ENCODE measurements at regions of chr1 and their contacts with region 1.

Region 1: DNA sequence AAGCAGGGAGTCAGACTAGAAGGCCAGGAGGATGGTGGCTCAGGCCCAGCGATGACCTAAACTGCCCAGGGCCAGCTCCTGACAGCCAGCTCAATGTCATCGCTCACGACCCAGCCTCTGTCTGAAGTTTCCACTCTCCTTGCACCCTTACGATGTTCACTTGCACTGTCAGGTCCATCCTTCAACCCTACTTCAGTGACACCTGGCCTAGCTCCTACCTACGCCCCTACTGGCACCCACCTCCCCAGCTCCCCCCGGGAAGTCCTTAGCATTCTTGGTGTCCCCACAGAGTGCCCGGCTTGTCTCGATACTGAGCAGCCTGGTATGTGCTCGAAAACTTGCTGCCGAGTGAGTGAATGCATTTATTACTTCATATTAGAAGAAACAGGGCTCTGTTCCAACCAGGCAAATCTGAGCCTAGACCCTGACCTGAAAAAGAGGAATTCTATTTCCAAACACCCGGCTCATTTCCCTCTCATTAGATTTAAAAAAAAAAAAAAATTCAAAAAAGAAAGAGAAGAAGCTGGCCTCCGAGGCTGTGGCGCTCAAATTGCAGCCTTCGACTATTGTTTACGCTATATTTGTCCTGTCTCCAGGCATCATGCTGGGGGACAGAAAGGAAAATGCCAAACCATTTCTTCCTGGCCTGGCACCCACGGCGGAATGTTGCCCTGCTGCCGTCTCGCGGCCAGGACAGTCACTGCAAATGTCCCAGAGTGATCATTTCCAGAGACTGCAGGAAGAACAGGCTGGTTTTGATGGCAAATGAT is 29.8 kb upstream of the LRRC38 start:
- DNase-seq: peak; percentile 67 to 69
- ATAC-seq: peak; percentile 62 to 83 (median 76)
- H3K4me3 ChIP-seq: peak overlapping the region in 1 of 10 donors; percentile 11
- H3K27ac ChIP-seq: peak overlapping the region; percentile 49 to 89 (median 82)
- H3K4me1 ChIP-seq: peaks cover 0 to 33% (median 5%) of the 10 kb centered on the region in 9 donors
- H3K27me3 ChIP-seq: peaks cover 0 to 3% (median 0%) of the 10 kb centered on the region in 7 donors
- CTCF ChIP-seq: peak in 8 of 9 donors; percentile 31 to 74 (median 56)

Region 2: GRCh38 chr1:13583966-13584791 is 40.5 kb after region 1 on chr1:
- intact Hi-C with region 1: loop called in 1 of 10 experiments (anchors 2 kb)
- DNase-seq: peak; percentile 10 to 43
- ATAC-seq: peak; percentile 53 to 90 (median 77)
- H3K4me3 ChIP-seq: peak overlapping the region; percentile 28 to 65 (median 56)
- H3K27ac ChIP-seq: peak overlapping the region in 9 of 10 donors; percentile 63 to 88 (median 71)
- H3K4me1 ChIP-seq: peaks cover 0 to 42% (median 4%) of the 10 kb centered on the region in 9 donors
- H3K27me3 ChIP-seq: peaks cover 0 to 73% (median 35%) of the 10 kb centered on the region in 7 donors
- CTCF ChIP-seq: no peak

Region 3: GRCh38 chr1:13922466-13923110 is 379.0 kb after region 1 on chr1:
- intact Hi-C with region 1: no loop called
- DNase-seq: no peak
- ATAC-seq: no peak
- H3K4me3 ChIP-seq: no peak overlapping the region
- H3K27ac ChIP-seq: no peak overlapping the region
- H3K4me1 ChIP-seq: no peaks in the 10 kb centered on the region
- H3K27me3 ChIP-seq: peaks cover 0 to 9% (median 0%) of the 10 kb centered on the region in 7 donors
- CTCF ChIP-seq: no peak

Measured in heart right ventricle (tissue), 16 donors.